PC-9 (cell line): ENCODE measurements at regions of chr1 and their contacts with region 1.

Region 1: GRCh38 chr1:111030590-111030989 is 66.9 kb upstream of the LRIF1 start:
- DNase-seq: peak; percentile 33 to 73
- H3K4me3 ChIP-seq: no peak overlapping the region
- H3K27ac ChIP-seq: no peak overlapping the region
- H3K4me1 ChIP-seq: no peaks in the 10 kb centered on the region
- H3K27me3 ChIP-seq: no peaks in the 10 kb centered on the region
- CTCF ChIP-seq: peak; percentile 97

Region 2: GRCh38 chr1:110986407-110986891 is 44.1 kb before region 1 on chr1:
- CTCF ChIA-PET with region 1: no interaction called
- POLR2A ChIA-PET with region 1: no interaction called
- intact Hi-C with region 1: no loop called
- DNase-seq: peak in 1 of 2 experiments; percentile 27
- H3K4me3 ChIP-seq: no peak overlapping the region
- H3K27ac ChIP-seq: no peak overlapping the region
- H3K4me1 ChIP-seq: no peaks in the 10 kb centered on the region
- H3K27me3 ChIP-seq: peaks cover 40% of the 10 kb centered on the region
- CTCF ChIP-seq: no peak

Region 3: GRCh38 chr1:111006541-111006940 is 24.0 kb before region 1 on chr1:
- CTCF ChIA-PET with region 1: no interaction called
- POLR2A ChIA-PET with region 1: no interaction called
- intact Hi-C with region 1: no loop called
- DNase-seq: no peak
- H3K4me3 ChIP-seq: no peak overlapping the region
- H3K27ac ChIP-seq: no peak overlapping the region
- H3K4me1 ChIP-seq: no peaks in the 10 kb centered on the region
- H3K27me3 ChIP-seq: peaks cover 8% of the 10 kb centered on the region; the same call in 1 of the 2 replicates
- CTCF ChIP-seq: no peak

Region 4: DNA sequence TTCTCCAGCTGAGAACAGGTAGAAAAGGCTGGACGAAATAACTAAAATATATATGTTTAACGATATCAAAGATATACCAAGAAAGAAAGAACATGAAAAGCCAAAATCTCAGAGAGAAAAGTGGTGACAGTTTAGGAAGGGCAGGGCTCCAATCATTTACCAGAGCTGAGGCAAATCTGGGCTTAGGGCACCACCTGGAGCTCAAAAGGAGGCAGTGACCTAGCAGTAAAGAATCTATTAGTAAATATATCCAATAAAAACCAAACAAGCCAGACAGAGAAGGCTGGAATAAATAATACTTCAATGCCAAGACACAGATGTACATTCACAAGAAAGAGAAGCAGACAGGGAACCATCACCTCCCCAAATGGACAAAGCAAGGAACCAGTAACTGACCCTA is 303.6 kb after region 1 on chr1:
- CTCF ChIA-PET with region 1: no interaction called
- POLR2A ChIA-PET with region 1: no interaction called
- intact Hi-C with region 1: loop called (anchors 5 kb)
- DNase-seq: peak; percentile 23 to 61
- H3K4me3 ChIP-seq: no peak overlapping the region
- H3K27ac ChIP-seq: no peak overlapping the region
- H3K4me1 ChIP-seq: no peaks in the 10 kb centered on the region
- H3K27me3 ChIP-seq: no peaks in the 10 kb centered on the region
- CTCF ChIP-seq: peak; percentile 97

Region 5: GRCh38 chr1:111406321-111406768 is 375.8 kb after region 1 on chr1:
- CTCF ChIA-PET with region 1: no interaction called
- POLR2A ChIA-PET with region 1: no interaction called
- intact Hi-C with region 1: loop called (anchors 5 kb)
- DNase-seq: peak in 1 of 2 experiments; percentile 42
- H3K4me3 ChIP-seq: no peak overlapping the region
- H3K27ac ChIP-seq: no peak overlapping the region
- H3K4me1 ChIP-seq: no peaks in the 10 kb centered on the region
- H3K27me3 ChIP-seq: peaks cover 62% of the 10 kb centered on the region
- CTCF ChIP-seq: no peak